CD8-positive, alpha-beta T cell (primary cell): ENCODE measurements at regions of chr3 and their contacts with region 1.

Region 1: GRCh38 chr3:43378066-43378935 is 92.0 kb downstream of the SNRK start:
- DNase-seq: peak; percentile 54 to 87 (median 78)
- ATAC-seq: peak; percentile 99
- H3K4me3 ChIP-seq: no peak overlapping the region
- H3K4me3 Mint-ChIP-seq: no peak overlapping the region
- H3K27ac ChIP-seq: no peak overlapping the region
- H3K27ac Mint-ChIP-seq: peak overlapping the region; percentile 72
- H3K4me1 ChIP-seq: peaks cover 16% of the 10 kb centered on the region
- H3K4me1 Mint-ChIP-seq: peaks cover 31% of the 10 kb centered on the region
- H3K27me3 ChIP-seq: no peaks in the 10 kb centered on the region
- H3K27me3 Mint-ChIP-seq: no peaks in the 10 kb centered on the region
- CTCF ChIP-seq: peak; percentile 79

Region 2: DNA sequence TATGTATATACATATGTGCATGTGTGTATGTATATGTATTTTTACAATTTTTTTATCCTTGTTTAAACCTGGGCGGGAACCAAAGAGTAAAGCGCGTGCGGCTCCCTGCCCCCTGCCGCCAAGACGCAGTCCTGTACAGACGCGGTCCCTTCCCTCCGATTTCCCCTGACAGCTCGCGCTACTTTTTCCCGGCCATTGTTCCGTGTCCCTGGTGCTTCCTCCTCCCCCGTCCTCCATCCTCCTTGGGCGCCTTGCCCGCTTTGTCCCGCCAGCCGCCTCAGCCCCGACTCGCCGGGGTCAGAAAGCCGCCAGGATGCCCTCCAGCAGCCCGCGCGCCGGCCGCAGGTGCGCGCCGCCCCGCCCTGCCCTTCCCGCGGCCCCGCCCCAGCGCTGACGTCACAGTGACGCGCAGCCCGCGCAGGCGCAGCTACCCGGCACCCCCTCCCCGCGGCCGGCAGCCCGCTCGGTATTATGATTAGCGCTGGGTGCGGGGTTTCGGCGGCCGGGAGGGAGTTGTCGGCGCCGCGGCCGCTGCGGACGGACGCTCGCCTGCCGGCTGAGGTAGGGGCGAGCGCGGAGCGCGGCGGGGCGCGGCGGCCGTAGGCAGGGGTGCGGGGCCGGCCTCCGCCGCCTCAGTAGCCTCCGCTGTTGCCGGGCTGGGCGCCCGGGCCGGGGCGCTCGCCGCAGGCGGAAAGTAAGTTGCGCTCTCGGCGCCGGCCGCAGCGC is 92.0 kb before region 1 on chr3 and contains the start of gene SNRK:
- CTCF ChIA-PET with region 1: interaction called, 13 read pairs
- POLR2A ChIA-PET with region 1: interaction called, 3 read pairs
- intact Hi-C with region 1: loop called (anchors 5 kb)
- DNase-seq: peak; percentile 86 to 99 (median 93)
- ATAC-seq: peak; percentile 84
- H3K4me3 ChIP-seq: peak within 1 kb of the TSS; percentile 76 to 82
- H3K4me3 Mint-ChIP-seq: peak within 1 kb of the TSS; percentile 99
- H3K27ac ChIP-seq: peak within 1 kb of the TSS; percentile 87 to 91
- H3K27ac Mint-ChIP-seq: peak within 1 kb of the TSS; percentile 100
- H3K4me1 ChIP-seq: peaks cover 27% of the 10 kb centered on the region
- H3K4me1 Mint-ChIP-seq: peaks cover 31% of the 10 kb centered on the region
- H3K27me3 ChIP-seq: no peaks in the 10 kb centered on the region
- H3K27me3 Mint-ChIP-seq: no peaks in the 10 kb centered on the region
- CTCF ChIP-seq: peak; percentile 48
- total RNA-seq, gene SNRK: 280 to 281 TPM

Region 3: DNA sequence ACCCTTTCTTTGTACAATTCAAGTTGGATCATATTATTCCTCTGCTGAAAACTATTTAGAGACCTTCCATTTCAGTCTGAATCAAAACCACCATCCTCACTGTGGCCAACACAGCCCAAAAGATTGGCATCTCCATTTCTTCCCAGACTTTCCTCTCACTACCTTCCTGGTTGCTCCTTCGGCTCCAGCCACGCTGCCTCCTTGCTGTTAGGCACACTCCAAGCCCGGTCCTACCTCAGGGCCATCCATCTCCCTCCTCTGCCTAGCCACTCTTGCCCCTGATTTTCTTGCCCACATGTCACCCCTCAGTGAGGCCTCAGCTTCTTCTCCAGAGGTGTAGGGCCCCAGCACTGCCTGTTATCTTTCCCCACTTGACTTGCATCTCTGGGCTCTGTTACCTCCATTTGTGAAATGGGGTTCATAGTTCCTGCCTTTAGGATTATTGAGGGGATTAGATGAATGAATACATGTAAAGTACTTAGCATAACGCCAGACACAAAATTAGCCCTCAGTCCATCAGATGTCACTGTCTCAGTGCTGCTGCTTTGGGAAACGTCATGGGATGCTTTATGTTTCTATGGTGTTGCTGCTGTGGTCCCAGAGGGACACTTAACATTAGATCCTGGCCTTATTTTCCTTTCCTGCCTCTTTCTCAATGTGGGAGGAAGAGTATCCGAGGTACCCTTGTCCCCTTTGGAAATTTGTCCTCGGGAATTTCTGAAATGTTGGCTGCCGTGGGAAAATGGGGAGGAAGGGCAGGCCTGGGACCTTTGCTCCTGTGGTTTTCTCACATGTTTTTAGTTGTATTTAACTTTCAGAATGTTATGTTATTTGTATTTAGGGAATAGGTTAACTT is 60.6 kb before region 1 on chr3:
- CTCF ChIA-PET with region 1: no interaction called
- POLR2A ChIA-PET with region 1: no interaction called
- intact Hi-C with region 1: loop called (anchors 5 to 10 kb)
- DNase-seq: no peak
- ATAC-seq: peak; percentile 39
- H3K4me3 ChIP-seq: no peak overlapping the region
- H3K4me3 Mint-ChIP-seq: peak overlapping the region; percentile 60
- H3K27ac ChIP-seq: peak overlapping the region in 1 of 2 experiments; percentile 10
- H3K27ac Mint-ChIP-seq: peak overlapping the region; percentile 90
- H3K4me1 ChIP-seq: peaks cover 88% of the 10 kb centered on the region
- H3K4me1 Mint-ChIP-seq: peaks cover 89% of the 10 kb centered on the region
- H3K27me3 ChIP-seq: no peaks in the 10 kb centered on the region
- H3K27me3 Mint-ChIP-seq: no peaks in the 10 kb centered on the region
- CTCF ChIP-seq: no peak

Region 4: GRCh38 chr3:43389388-43390254 is 11.3 kb after region 1 on chr3:
- CTCF ChIA-PET with region 1: interaction called, 8 read pairs
- POLR2A ChIA-PET with region 1: interaction called, 4 read pairs
- intact Hi-C with region 1: loop called in 1 of 2 experiments (anchors 1 kb)
- DNase-seq: peak; percentile 40 to 93 (median 74)
- ATAC-seq: peak; percentile 89
- H3K4me3 ChIP-seq: peak overlapping the region in 1 of 2 experiments; percentile 21
- H3K4me3 Mint-ChIP-seq: peak overlapping the region; percentile 50
- H3K27ac ChIP-seq: peak overlapping the region; percentile 45 to 85
- H3K27ac Mint-ChIP-seq: peak overlapping the region; percentile 92
- H3K4me1 ChIP-seq: peaks cover 32% of the 10 kb centered on the region
- H3K4me1 Mint-ChIP-seq: peaks cover 80% of the 10 kb centered on the region
- H3K27me3 ChIP-seq: no peaks in the 10 kb centered on the region
- H3K27me3 Mint-ChIP-seq: no peaks in the 10 kb centered on the region
- CTCF ChIP-seq: no peak